ENCODE measurements at regions of chr4 and their contacts with region 1.

Region 1: DNA sequence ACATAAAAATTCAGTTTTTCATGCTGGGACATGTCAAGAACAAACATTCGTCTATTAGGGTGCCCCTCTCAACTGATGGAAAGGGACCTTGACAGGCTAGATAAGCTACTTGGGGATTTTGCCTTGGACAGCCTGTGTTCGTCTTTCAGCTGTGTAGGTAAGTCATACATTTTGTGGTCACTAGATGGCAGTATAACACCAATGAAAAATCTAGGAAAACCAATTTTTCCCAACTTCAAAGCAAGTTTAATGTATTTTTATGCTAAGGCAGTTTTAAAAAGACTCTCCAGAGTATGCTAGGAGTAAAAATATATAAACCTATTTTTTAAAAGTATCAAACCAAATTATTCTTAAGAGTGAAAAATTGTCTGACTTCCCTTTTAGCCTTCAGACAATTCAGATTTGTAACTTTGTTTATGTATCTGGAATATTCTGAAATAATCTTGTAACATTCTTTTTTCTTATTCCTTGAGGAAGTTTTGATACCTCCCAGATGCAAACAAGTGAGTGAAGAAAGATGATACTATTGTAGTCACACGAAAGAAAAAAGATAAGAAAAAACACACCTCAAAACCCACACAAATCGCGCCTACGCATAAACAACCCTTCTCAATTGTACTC is 158.3 kb downstream of the CPE start:
- DNase-seq: no peak
- ATAC-seq: peak; percentile 50 to 57
- H3K4me3 ChIP-seq: no peak overlapping the region
- H3K27ac ChIP-seq: no peak overlapping the region
- H3K4me1 ChIP-seq: no peaks in the 10 kb centered on the region
- H3K27me3 ChIP-seq: no peaks in the 10 kb centered on the region

Region 2: GRCh38 chr4:165489786-165490185 is 47.4 kb before region 1 on chr4:
- intact Hi-C with region 1: no loop called
- DNase-seq: no peak
- ATAC-seq: no peak
- H3K4me3 ChIP-seq: no peak overlapping the region
- H3K27ac ChIP-seq: no peak overlapping the region
- H3K4me1 ChIP-seq: no peaks in the 10 kb centered on the region
- H3K27me3 ChIP-seq: no peaks in the 10 kb centered on the region

Region 3: DNA sequence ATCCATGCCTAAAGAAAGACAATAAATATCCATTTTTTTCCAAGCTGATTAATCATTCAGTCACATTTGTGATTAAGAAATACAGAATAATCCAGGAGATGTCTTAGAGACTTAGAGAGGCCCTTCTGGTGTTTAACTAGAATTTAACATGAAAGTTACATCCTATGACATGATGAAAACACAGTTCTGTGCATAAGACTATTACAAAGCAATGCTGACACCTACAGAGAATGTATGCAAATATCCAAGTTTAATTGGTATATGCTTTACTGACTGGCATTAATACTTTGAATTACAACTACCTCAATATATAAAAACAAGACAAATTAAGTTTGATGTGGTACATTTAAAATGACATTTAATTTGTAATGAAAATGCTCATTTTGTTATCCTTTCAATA is 318.1 kb after region 1 on chr4:
- intact Hi-C with region 1: loop called in 2 of 4 experiments (anchors 10 kb)
- DNase-seq: no peak
- ATAC-seq: no peak
- H3K4me3 ChIP-seq: no peak overlapping the region
- H3K27ac ChIP-seq: no peak overlapping the region
- H3K4me1 ChIP-seq: no peaks in the 10 kb centered on the region
- H3K27me3 ChIP-seq: no peaks in the 10 kb centered on the region

Region 4: GRCh38 chr4:166091912-166092510 is 554.9 kb after region 1 on chr4:
- intact Hi-C with region 1: loop called (anchors 2 to 10 kb)
- DNase-seq: no peak
- ATAC-seq: no peak
- H3K4me3 ChIP-seq: no peak overlapping the region
- H3K27ac ChIP-seq: no peak overlapping the region
- H3K4me1 ChIP-seq: no peaks in the 10 kb centered on the region
- H3K27me3 ChIP-seq: no peaks in the 10 kb centered on the region